CD4-positive, alpha-beta T cell (primary cell): ENCODE measurements at regions of chr9 and their contacts with region 1.

Region 1: DNA sequence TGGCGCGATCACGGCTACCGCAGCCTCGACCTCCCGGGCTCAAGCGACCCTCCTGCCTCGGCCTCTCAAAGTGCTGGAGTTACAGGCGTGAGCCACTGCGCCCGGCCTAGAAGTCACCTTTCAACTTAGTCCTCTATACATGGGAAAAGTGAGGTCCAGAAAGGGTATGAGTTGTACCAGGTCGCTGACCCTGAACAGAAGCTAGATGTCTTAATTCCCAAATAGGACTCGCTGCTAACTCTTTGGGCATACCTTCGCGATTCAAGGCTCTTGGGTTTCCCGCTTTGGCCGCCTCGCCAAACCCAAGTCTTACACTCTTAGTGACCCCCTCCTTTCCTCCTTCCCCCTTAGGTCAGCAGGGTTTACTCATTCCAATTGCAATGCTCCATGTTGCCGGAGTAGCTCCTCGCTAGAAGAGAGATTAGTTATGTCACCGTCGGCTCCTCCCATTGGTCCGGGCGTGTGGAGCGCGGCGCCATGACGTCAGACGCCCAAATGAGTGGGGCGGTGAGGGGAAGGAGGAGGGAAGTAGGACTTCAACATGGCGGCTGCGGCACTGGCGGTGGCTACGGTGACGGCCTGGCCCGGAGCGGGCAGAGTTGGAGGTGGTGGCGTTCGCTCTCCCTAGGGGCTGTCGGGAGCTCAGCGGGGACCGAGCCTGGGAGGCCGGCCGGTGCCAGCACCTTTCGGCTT is at the start of gene UBAP1:
- DNase-seq: peak; percentile 88 to 98 (median 94)
- ATAC-seq: peak; percentile 97
- H3K4me3 ChIP-seq: peak within 1 kb of the TSS; percentile 71
- H3K4me3 Mint-ChIP-seq: peak within 1 kb of the TSS; percentile 94
- H3K27ac ChIP-seq: peak within 1 kb of the TSS; percentile 87 to 90
- H3K27ac Mint-ChIP-seq: peak within 1 kb of the TSS; percentile 90
- H3K4me1 ChIP-seq: peaks cover 32% of the 10 kb centered on the region
- H3K4me1 Mint-ChIP-seq: peaks cover 15% of the 10 kb centered on the region
- H3K27me3 ChIP-seq: no peaks in the 10 kb centered on the region
- H3K27me3 Mint-ChIP-seq: no peaks in the 10 kb centered on the region
- CTCF ChIP-seq: no peak
- total RNA-seq, gene UBAP1: 47.1 to 50.4 TPM

Region 2: DNA sequence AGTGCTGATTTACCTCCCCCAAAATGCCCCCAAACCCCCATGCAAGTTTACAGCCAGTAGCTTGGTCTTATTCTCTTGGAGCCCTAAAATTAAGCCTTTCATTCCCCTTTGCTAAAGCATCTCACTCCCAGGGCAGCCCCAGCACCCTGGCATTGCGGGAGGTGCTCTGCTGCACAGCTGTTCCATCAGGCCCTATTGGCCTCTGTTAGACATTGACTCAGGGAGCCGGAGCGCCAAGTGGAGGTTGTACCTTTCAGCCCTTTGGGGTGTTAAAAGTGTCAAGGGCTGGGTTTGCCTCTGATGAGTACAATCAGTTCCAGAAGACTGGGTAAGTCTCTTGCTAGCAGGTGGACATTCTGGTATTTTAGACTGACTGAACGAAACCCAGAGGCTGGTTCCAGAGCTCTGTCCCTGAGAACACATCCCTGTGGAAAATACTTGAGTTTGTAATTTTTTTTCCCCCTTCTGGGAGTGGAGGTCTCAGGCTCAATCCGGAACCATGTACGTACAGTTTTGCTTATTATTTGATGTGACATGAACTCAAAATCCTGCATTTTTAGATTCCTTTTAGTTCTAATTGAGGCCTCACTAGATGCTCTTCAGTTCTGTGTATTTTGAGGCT is 259.3 kb before region 1 on chr9:
- CTCF ChIA-PET with region 1: no interaction called
- POLR2A ChIA-PET with region 1: no interaction called
- intact Hi-C with region 1: no loop called
- DNase-seq: no peak
- ATAC-seq: no peak
- H3K4me3 ChIP-seq: no peak overlapping the region
- H3K4me3 Mint-ChIP-seq: no peak overlapping the region
- H3K27ac ChIP-seq: no peak overlapping the region
- H3K27ac Mint-ChIP-seq: peak overlapping the region; percentile 62
- H3K4me1 ChIP-seq: no peaks in the 10 kb centered on the region
- H3K4me1 Mint-ChIP-seq: no peaks in the 10 kb centered on the region
- H3K27me3 ChIP-seq: no peaks in the 10 kb centered on the region
- H3K27me3 Mint-ChIP-seq: no peaks in the 10 kb centered on the region
- CTCF ChIP-seq: no peak

Region 3: GRCh38 chr9:34126207-34127034 is 52.2 kb before region 1 on chr9 and contains the start of gene DCAF12:
- CTCF ChIA-PET with region 1: no interaction called
- POLR2A ChIA-PET with region 1: interaction called, 11 read pairs
- intact Hi-C with region 1: loop called (anchors 1 kb)
- DNase-seq: peak; percentile 81 to 97 (median 88)
- ATAC-seq: peak; percentile 94
- H3K4me3 ChIP-seq: peak within 1 kb of the TSS; percentile 86
- H3K4me3 Mint-ChIP-seq: peak within 1 kb of the TSS; percentile 100
- H3K27ac ChIP-seq: peak within 1 kb of the TSS; percentile 86 to 88
- H3K27ac Mint-ChIP-seq: peak within 1 kb of the TSS; percentile 99
- H3K4me1 ChIP-seq: peaks cover 45% of the 10 kb centered on the region
- H3K4me1 Mint-ChIP-seq: peaks cover 57% of the 10 kb centered on the region
- H3K27me3 ChIP-seq: no peaks in the 10 kb centered on the region
- H3K27me3 Mint-ChIP-seq: no peaks in the 10 kb centered on the region
- CTCF ChIP-seq: no peak
- total RNA-seq, gene DCAF12: 5.4 to 5.9 TPM